PC-9 (cell line): ENCODE measurements at regions of chr1 and their contacts with region 1.

Region 1: GRCh38 chr1:38125837-38126520 is 79.4 kb upstream of the POU3F1 start:
- DNase-seq: peak; percentile 85 to 95
- H3K4me3 ChIP-seq: peak overlapping the region; percentile 17; the same call in 1 of the 2 replicates
- H3K27ac ChIP-seq: peak overlapping the region; percentile 46
- H3K4me1 ChIP-seq: peaks cover 59% of the 10 kb centered on the region
- H3K27me3 ChIP-seq: no peaks in the 10 kb centered on the region
- CTCF ChIP-seq: no peak

Region 2: DNA sequence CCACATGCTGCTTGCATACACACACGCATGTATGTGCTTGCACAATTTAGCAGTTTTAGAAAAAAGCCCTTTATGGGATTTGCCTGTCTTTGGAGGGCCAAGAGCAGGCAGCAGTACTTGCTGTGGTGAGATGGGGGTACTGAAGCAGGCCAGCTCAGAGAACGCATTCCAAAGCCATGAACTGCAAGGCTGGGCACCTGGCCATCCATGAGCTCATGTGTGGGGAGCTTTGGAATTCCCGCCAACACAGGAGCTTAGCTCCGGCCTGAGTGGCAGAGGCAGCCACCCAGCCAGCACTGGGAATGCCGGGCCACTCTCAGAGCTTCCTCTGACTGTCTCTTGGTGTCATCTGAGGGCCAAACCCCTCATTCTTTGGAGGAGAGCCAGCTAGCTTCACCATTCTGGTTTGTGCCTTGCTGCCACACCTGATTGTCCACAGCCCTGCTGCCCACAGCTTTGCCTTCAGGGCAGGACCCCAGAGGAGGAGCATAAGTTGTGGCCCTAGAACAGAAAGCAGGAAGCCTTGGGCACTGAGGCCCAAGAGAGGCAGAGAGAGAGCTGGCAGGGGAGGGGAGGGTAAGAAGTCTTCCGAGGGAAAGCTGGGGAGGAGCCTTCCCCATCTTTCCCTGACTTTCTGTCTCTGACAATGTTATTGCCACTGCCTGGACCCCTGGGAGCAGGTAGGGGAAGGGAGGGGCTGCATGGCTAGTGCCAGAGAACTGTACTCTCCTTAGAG is 12.7 kb after region 1 on chr1:
- CTCF ChIA-PET with region 1: interaction called, 8 read pairs
- POLR2A ChIA-PET with region 1: interaction called, 8 read pairs
- intact Hi-C with region 1: loop called (anchors 1 kb)
- DNase-seq: peak; percentile 99
- H3K4me3 ChIP-seq: no peak overlapping the region; the same call in 1 of the 2 replicates
- H3K27ac ChIP-seq: peak overlapping the region; percentile 48
- H3K4me1 ChIP-seq: peaks cover 58% of the 10 kb centered on the region
- H3K27me3 ChIP-seq: no peaks in the 10 kb centered on the region
- CTCF ChIP-seq: no peak